Endothelial cell of umbilical vein (primary cell): ENCODE measurements at regions of chr19 and their contacts with region 1.

Region 1: GRCh38 chr19:36850559-36851442 is at the start of gene ZNF345:
- DNase-seq: peak; percentile 95
- H3K4me3 ChIP-seq: peak within 1 kb of the TSS; percentile 49 to 75 (median 72)
- H3K27ac ChIP-seq: peak within 1 kb of the TSS; percentile 83
- H3K4me1 ChIP-seq: peaks cover 10% of the 10 kb centered on the region
- H3K27me3 ChIP-seq: no peaks in the 10 kb centered on the region
- CTCF ChIP-seq: no peak
- POLR2A ChIP-seq: peak; percentile 44
- total RNA-seq, gene ZNF345: 3.4 and 3.8 TPM in 2 replicates

Region 2: GRCh38 chr19:35352448-35353304 is 1498.1 kb before region 1 on chr19:
- CTCF ChIA-PET with region 1: no interaction called
- POLR2A ChIA-PET with region 1: no interaction called
- dilution Hi-C with region 1: no loop called
- intact Hi-C with region 1: no loop called
- DNase-seq: peak; percentile 66
- H3K4me3 ChIP-seq: no peak overlapping the region
- H3K27ac ChIP-seq: no peak overlapping the region
- H3K4me1 ChIP-seq: no peaks in the 10 kb centered on the region
- H3K27me3 ChIP-seq: no peaks in the 10 kb centered on the region
- CTCF ChIP-seq: peak; percentile 70 to 76
- POLR2A ChIP-seq: no peak

Region 3: DNA sequence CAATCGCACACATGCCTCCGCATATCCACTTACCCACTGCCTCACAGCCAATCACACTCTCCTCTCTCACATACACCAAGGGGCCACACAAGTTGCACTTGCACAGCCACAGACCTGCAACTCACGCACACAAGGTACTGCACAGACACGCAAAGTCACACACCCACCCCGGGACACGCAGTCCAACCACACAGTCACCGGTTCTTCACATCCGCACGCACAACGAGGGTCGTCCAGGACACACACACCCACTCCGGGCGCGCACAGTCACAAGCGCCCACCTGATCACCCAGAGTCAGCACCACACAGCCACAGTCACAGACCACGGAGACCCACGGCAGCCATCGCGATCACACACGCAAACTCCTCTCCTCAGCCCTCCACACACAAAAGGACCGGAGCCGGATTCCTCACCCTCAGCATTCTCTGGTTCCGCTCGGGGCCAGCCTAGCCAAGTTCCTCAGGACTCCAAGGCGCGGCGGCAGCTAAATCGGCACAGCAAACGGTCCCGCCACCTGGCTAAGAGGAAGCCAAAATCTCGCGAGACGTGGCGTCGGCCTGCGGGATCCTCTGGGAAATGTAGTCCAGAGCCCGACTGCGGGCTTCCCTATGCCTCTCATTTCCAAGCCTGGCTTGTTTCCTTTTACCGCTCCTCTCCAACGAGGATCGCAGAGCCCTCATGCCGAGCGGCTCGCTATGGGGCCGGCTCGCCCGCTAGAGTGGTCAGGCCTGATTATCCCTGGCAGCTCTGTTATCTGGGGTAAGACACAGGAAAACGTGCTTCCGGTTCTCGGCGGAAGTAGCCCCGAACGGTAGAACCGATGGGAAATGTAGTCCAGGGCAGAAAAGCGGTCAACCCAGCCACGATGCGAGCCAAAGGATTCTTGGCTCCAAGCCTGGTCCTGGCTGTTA is 78.2 kb before region 1 on chr19 and contains the start of gene ZNF850:
- CTCF ChIA-PET with region 1: interaction called, 4 read pairs
- POLR2A ChIA-PET with region 1: interaction called, 3 read pairs
- dilution Hi-C with region 1: no loop called
- intact Hi-C with region 1: loop called (anchors 5 kb)
- DNase-seq: peak; percentile 92
- H3K4me3 ChIP-seq: peak within 1 kb of the TSS; percentile 31 to 76 (median 40)
- H3K27ac ChIP-seq: peak within 1 kb of the TSS; percentile 33
- H3K4me1 ChIP-seq: peaks cover 11% of the 10 kb centered on the region
- H3K27me3 ChIP-seq: no peaks in the 10 kb centered on the region
- CTCF ChIP-seq: no peak
- POLR2A ChIP-seq: no peak
- total RNA-seq, gene ZNF850: 3.6 and 4.5 TPM in 2 replicates

Region 4: GRCh38 chr19:36797786-36798108 is 53.1 kb before region 1 on chr19:
- CTCF ChIA-PET with region 1: interaction called, 3 read pairs
- POLR2A ChIA-PET with region 1: no interaction called
- dilution Hi-C with region 1: no loop called
- intact Hi-C with region 1: loop called (anchors 1 kb)
- DNase-seq: no peak
- H3K4me3 ChIP-seq: peak overlapping the region; percentile 23 to 83 (median 73)
- H3K27ac ChIP-seq: peak overlapping the region; percentile 34
- H3K4me1 ChIP-seq: no peaks in the 10 kb centered on the region
- H3K27me3 ChIP-seq: no peaks in the 10 kb centered on the region
- CTCF ChIP-seq: no peak
- POLR2A ChIP-seq: no peak

Region 5: DNA sequence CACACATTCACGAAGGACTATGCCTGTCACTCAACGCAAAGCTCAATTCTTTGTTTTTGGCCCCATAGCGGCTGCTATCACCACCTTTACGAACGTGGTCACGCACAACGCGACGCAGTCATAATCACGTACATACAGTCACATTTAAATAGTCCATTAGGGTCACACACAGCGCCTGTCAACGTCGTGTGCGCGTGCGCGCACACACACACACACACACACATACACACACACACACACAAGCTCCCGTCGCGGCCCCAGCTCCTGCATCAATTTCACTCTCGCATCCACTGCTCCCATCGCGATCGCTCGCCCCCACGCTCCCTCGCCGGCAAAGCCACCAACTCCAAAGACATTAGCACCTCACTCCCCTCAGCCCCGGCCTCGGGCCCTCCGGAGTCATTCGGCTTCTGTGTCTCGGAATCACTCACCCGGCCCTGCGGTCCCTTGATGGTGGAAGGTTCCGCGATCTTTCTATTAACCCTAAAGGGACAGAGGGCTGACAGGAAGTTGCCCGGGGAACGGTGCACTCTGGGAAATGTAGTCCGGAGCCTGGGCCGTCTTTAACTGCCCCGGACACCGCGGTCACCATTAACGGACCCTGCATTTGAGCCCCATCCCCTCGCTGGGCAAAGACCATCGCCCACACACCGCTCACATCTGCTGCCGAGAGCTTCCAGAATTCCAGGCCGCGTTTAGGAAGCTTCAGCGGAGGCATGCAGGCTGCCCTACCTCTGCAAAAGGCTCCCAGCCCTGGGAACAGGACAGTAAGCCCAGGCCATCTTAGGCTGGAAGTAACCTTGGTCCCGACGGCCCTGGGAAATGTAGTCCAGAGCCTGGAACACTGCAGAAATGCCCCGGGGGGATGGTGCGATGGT is 12.7 kb before region 1 on chr19 and contains the start of gene ZNF790:
- CTCF ChIA-PET with region 1: interaction called, 12 read pairs
- POLR2A ChIA-PET with region 1: interaction called, 26 read pairs
- dilution Hi-C with region 1: no loop called
- intact Hi-C with region 1: loop called (anchors 1 kb)
- DNase-seq: peak; percentile 91
- H3K4me3 ChIP-seq: peak within 1 kb of the TSS; percentile 37 to 64 (median 43)
- H3K27ac ChIP-seq: peak within 1 kb of the TSS; percentile 44
- H3K4me1 ChIP-seq: peaks cover 3% of the 10 kb centered on the region
- H3K27me3 ChIP-seq: no peaks in the 10 kb centered on the region
- CTCF ChIP-seq: no peak
- POLR2A ChIP-seq: peak; percentile 44
- total RNA-seq, gene ZNF790: 5.2 and 5.6 TPM in 2 replicates

Region 6: DNA sequence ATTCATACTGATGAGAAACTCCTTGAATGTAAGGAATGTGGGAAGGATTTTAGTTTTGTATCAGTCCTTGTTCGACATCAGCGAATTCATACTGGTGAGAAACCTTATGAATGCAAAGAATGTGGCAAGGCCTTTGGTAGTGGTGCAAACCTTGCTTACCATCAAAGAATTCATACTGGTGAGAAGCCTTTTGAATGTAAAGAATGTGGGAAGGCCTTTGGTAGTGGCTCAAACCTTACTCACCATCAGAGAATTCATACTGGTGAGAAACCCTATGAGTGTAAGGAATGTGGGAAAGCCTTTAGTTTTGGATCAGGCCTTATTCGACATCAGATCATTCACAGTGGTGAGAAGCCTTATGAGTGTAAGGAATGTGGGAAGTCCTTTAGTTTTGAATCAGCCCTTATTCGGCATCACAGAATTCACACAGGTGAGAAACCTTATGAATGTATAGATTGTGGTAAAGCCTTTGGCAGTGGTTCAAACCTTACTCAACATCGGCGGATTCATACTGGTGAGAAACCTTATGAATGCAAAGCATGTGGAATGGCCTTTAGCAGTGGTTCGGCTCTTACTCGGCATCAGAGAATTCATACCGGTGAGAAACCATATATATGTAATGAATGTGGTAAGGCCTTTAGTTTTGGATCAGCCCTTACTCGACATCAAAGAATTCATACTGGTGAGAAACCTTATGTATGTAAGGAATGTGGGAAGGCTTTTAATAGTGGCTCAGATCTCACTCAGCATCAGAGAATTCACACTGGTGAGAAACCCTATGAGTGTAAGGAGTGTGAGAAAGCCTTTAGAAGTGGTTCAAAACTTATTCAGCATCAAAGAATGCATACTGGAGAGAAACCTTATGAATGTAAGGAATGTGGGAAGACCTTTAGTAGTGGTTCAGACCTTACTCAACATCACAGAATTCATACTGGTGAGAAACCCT is 26.5 kb after region 1 on chr19:
- CTCF ChIA-PET with region 1: no interaction called
- POLR2A ChIA-PET with region 1: no interaction called
- dilution Hi-C with region 1: no loop called
- intact Hi-C with region 1: no loop called
- DNase-seq: no peak
- H3K4me3 ChIP-seq: no peak overlapping the region
- H3K27ac ChIP-seq: no peak overlapping the region
- H3K4me1 ChIP-seq: no peaks in the 10 kb centered on the region
- H3K27me3 ChIP-seq: no peaks in the 10 kb centered on the region
- CTCF ChIP-seq: no peak
- POLR2A ChIP-seq: no peak

Region 7: GRCh38 chr19:36997152-36997842 is 146.5 kb after region 1 on chr19:
- CTCF ChIA-PET with region 1: no interaction called
- POLR2A ChIA-PET with region 1: no interaction called
- dilution Hi-C with region 1: no loop called
- intact Hi-C with region 1: no loop called
- DNase-seq: no peak
- H3K4me3 ChIP-seq: no peak overlapping the region
- H3K27ac ChIP-seq: no peak overlapping the region
- H3K4me1 ChIP-seq: no peaks in the 10 kb centered on the region
- H3K27me3 ChIP-seq: no peaks in the 10 kb centered on the region
- CTCF ChIP-seq: no peak
- POLR2A ChIP-seq: no peak

Region 8: DNA sequence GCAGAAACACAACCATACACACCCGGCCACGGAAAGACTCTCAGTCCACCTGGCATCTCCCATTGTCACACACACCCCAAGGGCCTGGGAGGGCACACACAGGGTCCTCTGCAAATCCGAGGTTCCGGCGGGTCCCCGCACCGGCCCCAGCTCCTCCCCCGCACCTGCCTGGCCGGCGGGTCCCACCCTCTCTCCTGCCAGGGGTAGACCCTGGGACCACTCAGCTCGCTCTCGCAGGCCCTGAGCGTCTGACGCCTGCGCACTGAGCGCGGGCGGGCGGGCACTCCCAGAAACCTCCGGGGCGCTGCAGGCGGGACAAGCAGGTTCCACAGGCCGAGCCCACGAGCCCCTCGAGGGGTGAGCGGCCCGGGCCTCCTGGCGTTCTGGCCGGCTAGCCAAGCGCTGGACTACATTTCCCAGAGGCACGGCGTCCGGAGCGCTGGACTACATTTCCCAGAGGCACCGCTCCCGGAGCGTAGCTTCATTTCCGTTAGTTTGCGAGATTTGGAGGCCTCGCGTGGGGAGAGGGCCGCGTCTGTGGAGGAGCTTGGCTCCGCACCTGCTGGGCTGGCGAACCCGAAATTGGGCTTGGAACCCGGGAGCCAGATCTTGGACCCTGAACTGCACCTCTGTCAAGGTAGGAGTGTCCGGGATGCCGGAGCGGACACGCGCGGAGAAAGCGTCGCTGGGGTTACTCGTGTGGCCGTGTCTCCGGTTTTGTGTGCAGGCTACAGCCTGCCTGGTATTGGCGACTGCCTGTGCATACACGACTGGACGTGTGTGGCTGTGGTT is 227.3 kb after region 1 on chr19 and contains the start of gene ZNF420:
- CTCF ChIA-PET with region 1: no interaction called
- POLR2A ChIA-PET with region 1: no interaction called
- dilution Hi-C with region 1: no loop called
- intact Hi-C with region 1: loop called (anchors 1 kb)
- DNase-seq: peak; percentile 94
- H3K4me3 ChIP-seq: peak within 1 kb of the TSS; percentile 66 to 80 (median 77)
- H3K27ac ChIP-seq: peak within 1 kb of the TSS; percentile 28
- H3K4me1 ChIP-seq: peaks cover 9% of the 10 kb centered on the region
- H3K27me3 ChIP-seq: no peaks in the 10 kb centered on the region
- CTCF ChIP-seq: no peak
- POLR2A ChIP-seq: peak; percentile 64
- total RNA-seq, gene ZNF420: 4.2 and 5.3 TPM in 2 replicates